ENCODE measurements at regions of chr4 and their contacts with region 1.

Region 1: GRCh38 chr4:14787894-14788293 is 214.4 kb upstream of the CPEB2 start:
- DNase-seq: peak; percentile 6 to 39 (median 17)
- H3K4me3 ChIP-seq: no peak overlapping the region
- H3K4me3 Mint-ChIP-seq: no peak overlapping the region
- H3K27ac ChIP-seq: no peak overlapping the region
- H3K27ac Mint-ChIP-seq: no peak overlapping the region
- H3K4me1 ChIP-seq: no peaks in the 10 kb centered on the region
- H3K4me1 Mint-ChIP-seq: no peaks in the 10 kb centered on the region
- H3K27me3 ChIP-seq: no peaks in the 10 kb centered on the region
- H3K27me3 Mint-ChIP-seq: peaks cover 0 to 3% (median 3%) of the 10 kb centered on the region in 3 donors
- CTCF ChIP-seq: peak; percentile 64

Region 2: GRCh38 chr4:13654158-13654797 is 1133.6 kb before region 1 on chr4:
- intact Hi-C with region 1: loop called (anchors 5 to 10 kb)
- DNase-seq: peak; percentile 47 to 60 (median 59)
- H3K4me3 ChIP-seq: peak overlapping the region; percentile 32 to 78 (median 34)
- H3K4me3 Mint-ChIP-seq: peak overlapping the region; percentile 80 to 93
- H3K27ac ChIP-seq: no peak overlapping the region
- H3K27ac Mint-ChIP-seq: peak overlapping the region in 1 of 7 donors; percentile 30
- H3K4me1 ChIP-seq: peaks cover 10 to 14% of the 10 kb centered on the region in 2 donors
- H3K4me1 Mint-ChIP-seq: peaks cover 18% of the 10 kb centered on the region
- H3K27me3 ChIP-seq: peaks cover 2 to 8% of the 10 kb centered on the region in 2 donors
- H3K27me3 Mint-ChIP-seq: peaks cover 0 to 16% (median 4%) of the 10 kb centered on the region in 3 donors
- CTCF ChIP-seq: peak; percentile 87